Caco-2 (cell line): ENCODE measurements at regions of chr21 and their contacts with region 1.

Region 1: DNA sequence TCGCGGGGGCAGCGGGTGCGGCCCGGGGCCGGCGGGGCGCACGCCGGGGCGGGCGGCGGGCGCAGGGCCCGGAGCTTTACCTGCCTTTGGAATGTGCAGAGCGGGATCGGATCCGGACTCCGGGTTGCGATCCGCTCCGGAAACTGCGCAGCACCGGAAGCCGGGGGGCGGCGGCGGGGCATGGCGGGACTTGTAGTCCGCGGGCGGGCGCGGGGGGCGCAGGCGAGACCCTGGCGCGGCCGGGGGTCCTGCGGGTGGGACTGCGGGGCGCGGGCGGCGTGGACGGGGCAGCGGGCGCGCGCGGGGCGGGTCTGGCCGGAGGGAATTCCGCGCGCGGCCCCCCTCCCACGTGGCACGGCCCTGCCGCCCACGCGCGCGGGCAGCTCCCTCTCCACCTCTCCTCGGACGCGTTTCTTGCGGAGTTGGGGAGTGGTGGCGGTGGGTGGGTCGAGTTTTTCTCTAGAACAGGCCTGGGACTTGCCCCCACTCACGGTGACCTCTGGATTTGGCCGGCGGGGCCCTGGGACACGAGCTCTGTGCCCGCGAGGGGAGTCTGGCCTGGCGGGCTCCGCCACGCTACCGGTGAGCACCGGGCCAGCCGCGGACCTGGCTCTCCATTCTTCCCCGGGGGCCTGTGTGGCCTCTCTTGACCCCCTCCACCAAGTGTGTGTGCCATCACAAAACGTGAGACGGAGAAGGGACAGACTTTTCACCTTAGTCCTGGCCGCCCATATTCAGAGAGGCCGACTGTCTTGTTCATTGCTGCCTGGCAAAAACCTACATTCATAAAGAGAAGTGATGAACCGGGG is at the start of gene PRDM15:
- DNase-seq: peak; percentile 86 to 87
- H3K4me3 ChIP-seq: peak within 1 kb of the TSS; percentile 84
- H3K4me3 Mint-ChIP-seq: peak within 1 kb of the TSS; percentile 83
- H3K27ac Mint-ChIP-seq: peak within 1 kb of the TSS; percentile 88
- H3K4me1 ChIP-seq: peaks cover 9% of the 10 kb centered on the region; the same call in 1 of the 2 replicates
- H3K4me1 Mint-ChIP-seq: no peaks in the 10 kb centered on the region
- H3K27me3 ChIP-seq: no peaks in the 10 kb centered on the region
- H3K27me3 Mint-ChIP-seq: no peaks in the 10 kb centered on the region
- CTCF ChIP-seq: no peak
- total RNA-seq, gene PRDM15: 5.6 and 8.2 TPM in 2 replicates

Region 2: DNA sequence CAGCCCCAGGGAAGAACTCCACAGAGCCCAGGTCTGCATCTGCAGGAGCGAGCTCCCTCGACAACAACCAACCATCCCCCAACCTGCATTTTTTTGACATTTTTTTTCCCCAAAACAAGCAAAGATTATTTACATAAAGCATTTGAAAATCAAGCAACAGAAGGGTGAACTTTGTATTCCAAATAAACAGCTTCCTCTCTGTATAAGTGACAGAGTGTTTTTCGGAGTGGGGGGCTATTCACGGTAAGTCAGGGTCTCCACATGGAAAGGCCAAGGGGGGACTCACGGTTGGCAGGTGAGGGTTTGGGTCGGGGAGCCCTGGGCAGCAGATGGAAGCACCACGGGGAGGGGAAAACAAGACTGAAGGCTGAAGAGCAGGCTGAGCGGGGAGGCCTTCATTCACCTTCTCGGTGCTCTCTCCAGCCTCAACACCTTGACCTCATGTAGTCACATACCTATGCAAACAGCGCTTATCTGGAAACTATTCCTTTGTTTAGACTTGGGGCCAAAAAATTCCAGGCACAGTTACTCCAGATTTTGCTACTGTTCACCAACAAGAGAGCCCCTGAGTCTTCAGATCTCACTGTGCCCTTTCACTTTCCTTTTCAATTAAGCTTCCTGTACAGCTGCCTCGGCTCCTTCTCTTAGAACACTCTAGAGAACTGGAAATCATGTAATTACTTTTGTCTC is 46.9 kb after region 1 on chr21:
- CTCF ChIA-PET with region 1: interaction called, 4 read pairs
- POLR2A ChIA-PET with region 1: no interaction called
- intact Hi-C with region 1: loop called (anchors 2 kb)
- DNase-seq: peak; percentile 67 to 75
- H3K4me3 ChIP-seq: peak overlapping the region; percentile 18; the same call in 1 of the 2 replicates
- H3K4me3 Mint-ChIP-seq: peak overlapping the region; percentile 71
- H3K27ac Mint-ChIP-seq: peak overlapping the region; percentile 78
- H3K4me1 ChIP-seq: peaks cover 49% of the 10 kb centered on the region
- H3K4me1 Mint-ChIP-seq: peaks cover 32% of the 10 kb centered on the region
- H3K27me3 ChIP-seq: no peaks in the 10 kb centered on the region
- H3K27me3 Mint-ChIP-seq: no peaks in the 10 kb centered on the region
- CTCF ChIP-seq: no peak